Endothelial cell of umbilical vein (primary cell): ENCODE measurements at regions of chr3 and their contacts with region 1.

Region 1: GRCh38 chr3:57446318-57446841 is 97.8 kb downstream of the DNAH12 start:
- DNase-seq: no peak
- H3K4me3 ChIP-seq: no peak overlapping the region
- H3K27ac ChIP-seq: no peak overlapping the region
- H3K4me1 ChIP-seq: peaks cover 15% of the 10 kb centered on the region
- H3K27me3 ChIP-seq: no peaks in the 10 kb centered on the region
- CTCF ChIP-seq: no peak
- POLR2A ChIP-seq: no peak

Region 2: GRCh38 chr3:57409456-57409855 is 36.9 kb before region 1 on chr3:
- CTCF ChIA-PET with region 1: no interaction called
- POLR2A ChIA-PET with region 1: no interaction called
- dilution Hi-C with region 1: no loop called
- intact Hi-C with region 1: no loop called
- DNase-seq: no peak
- H3K4me3 ChIP-seq: no peak overlapping the region
- H3K27ac ChIP-seq: no peak overlapping the region
- H3K4me1 ChIP-seq: no peaks in the 10 kb centered on the region
- H3K27me3 ChIP-seq: no peaks in the 10 kb centered on the region
- CTCF ChIP-seq: no peak
- POLR2A ChIP-seq: no peak

Region 3: GRCh38 chr3:57434041-57434440 is 12.3 kb before region 1 on chr3:
- CTCF ChIA-PET with region 1: interaction called, 10 read pairs
- POLR2A ChIA-PET with region 1: no interaction called
- dilution Hi-C with region 1: no loop called
- intact Hi-C with region 1: loop called (anchors 2 kb)
- DNase-seq: peak; percentile 57
- H3K4me3 ChIP-seq: no peak overlapping the region
- H3K27ac ChIP-seq: no peak overlapping the region
- H3K4me1 ChIP-seq: no peaks in the 10 kb centered on the region
- H3K27me3 ChIP-seq: no peaks in the 10 kb centered on the region
- CTCF ChIP-seq: peak; percentile 24 to 48
- POLR2A ChIP-seq: no peak

Region 4: GRCh38 chr3:57555738-57556458 is 109.5 kb after region 1 on chr3 and contains the start of gene PDE12:
- CTCF ChIA-PET with region 1: no interaction called
- POLR2A ChIA-PET with region 1: no interaction called
- dilution Hi-C with region 1: no loop called
- intact Hi-C with region 1: no loop called
- DNase-seq: peak; percentile 89
- H3K4me3 ChIP-seq: peak within 1 kb of the TSS; percentile 44 to 84 (median 48)
- H3K27ac ChIP-seq: peak within 1 kb of the TSS; percentile 81
- H3K4me1 ChIP-seq: peaks cover 16% of the 10 kb centered on the region
- H3K27me3 ChIP-seq: no peaks in the 10 kb centered on the region
- CTCF ChIP-seq: no peak
- POLR2A ChIP-seq: peak; percentile 90
- total RNA-seq, gene PDE12: 19.0 and 20.4 TPM in 2 replicates